ENCODE measurements at regions of chr1 and their contacts with region 1.

Region 1: GRCh38 chr1:26724926-26725325 is 29.1 kb downstream of the ARID1A start:
- DNase-seq: no peak
- ATAC-seq: no peak
- H3K4me3 ChIP-seq: no peak overlapping the region
- H3K27ac ChIP-seq: no peak overlapping the region
- H3K4me1 ChIP-seq: peaks cover 42 to 66% of the 10 kb centered on the region in 2 experiments
- H3K27me3 ChIP-seq: no peaks in the 10 kb centered on the region
- CTCF ChIP-seq: no peak
- POLR2A ChIP-seq: no peak
- RAD21 ChIP-seq: no peak

Region 2: GRCh38 chr1:26417111-26417759 is 307.7 kb before region 1 on chr1:
- CTCF ChIA-PET with region 1: no interaction called
- POLR2A ChIA-PET with region 1: no interaction called
- RAD21 ChIA-PET with region 1: no interaction called
- intact Hi-C with region 1: no loop called
- DNase-seq: peak; percentile 80
- ATAC-seq: peak; percentile 100
- H3K4me3 ChIP-seq: no peak overlapping the region
- H3K27ac ChIP-seq: no peak overlapping the region
- H3K4me1 ChIP-seq: peaks cover 0 to 19% of the 10 kb centered on the region in 2 experiments; a peak in 2 of 4 replicates
- H3K27me3 ChIP-seq: no peaks in the 10 kb centered on the region; the same call in 1 of the 2 replicates
- CTCF ChIP-seq: peak; percentile 76 to 95 (median 89)
- POLR2A ChIP-seq: no peak
- RAD21 ChIP-seq: peak; percentile 84

Region 3: GRCh38 chr1:26438041-26438440 is 286.9 kb before region 1 on chr1:
- CTCF ChIA-PET with region 1: no interaction called
- POLR2A ChIA-PET with region 1: no interaction called
- RAD21 ChIA-PET with region 1: no interaction called
- intact Hi-C with region 1: no loop called
- DNase-seq: no peak
- ATAC-seq: no peak
- H3K4me3 ChIP-seq: no peak overlapping the region
- H3K27ac ChIP-seq: no peak overlapping the region
- H3K4me1 ChIP-seq: peaks cover 3 to 4% of the 10 kb centered on the region in 2 experiments; a peak in 2 of 4 replicates
- H3K27me3 ChIP-seq: no peaks in the 10 kb centered on the region
- CTCF ChIP-seq: no peak
- POLR2A ChIP-seq: no peak
- RAD21 ChIP-seq: no peak

Region 4: DNA sequence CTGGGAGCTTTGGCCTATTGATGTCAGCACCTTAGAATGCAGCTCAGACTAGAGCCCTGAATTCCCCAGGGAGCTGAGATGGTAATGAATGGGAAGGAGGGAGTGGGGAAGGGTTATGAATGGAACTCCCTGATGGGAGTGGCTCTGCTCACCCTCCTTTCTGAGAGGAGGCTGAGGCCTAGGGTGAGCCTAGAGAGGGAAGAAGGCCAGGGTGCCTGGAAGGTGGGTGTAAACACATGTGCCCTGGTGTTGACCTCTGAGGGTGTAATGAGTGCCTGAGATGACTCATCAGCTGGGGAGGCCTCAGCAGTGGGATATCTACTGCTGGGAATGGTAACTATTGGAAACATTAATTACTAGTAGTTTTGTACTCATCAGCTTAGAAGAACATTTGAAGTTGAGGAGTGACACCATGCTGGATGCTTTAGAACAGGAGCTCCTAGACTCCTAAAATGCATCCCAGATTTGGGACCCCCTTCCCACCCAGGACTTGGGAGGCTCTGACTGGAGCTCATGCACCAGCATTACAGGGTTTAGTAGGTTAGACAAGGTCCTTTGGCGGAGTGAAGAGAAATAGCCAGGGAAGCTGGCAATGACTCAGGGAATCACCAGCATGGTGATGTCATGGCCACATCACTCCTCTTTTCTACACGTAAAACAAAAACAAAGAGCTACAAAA is 46.9 kb after region 1 on chr1:
- CTCF ChIA-PET with region 1: no interaction called
- POLR2A ChIA-PET with region 1: no interaction called
- RAD21 ChIA-PET with region 1: no interaction called
- intact Hi-C with region 1: loop called (anchors 5 kb)
- DNase-seq: peak; percentile 52
- ATAC-seq: peak; percentile 90
- H3K4me3 ChIP-seq: peak overlapping the region in 1 of 2 experiments; percentile 26; a peak in 2 of 4 replicates
- H3K27ac ChIP-seq: peak overlapping the region; percentile 52
- H3K4me1 ChIP-seq: peaks cover 21 to 59% of the 10 kb centered on the region in 2 experiments
- H3K27me3 ChIP-seq: no peaks in the 10 kb centered on the region
- CTCF ChIP-seq: no peak
- POLR2A ChIP-seq: no peak
- RAD21 ChIP-seq: no peak

Measured in HCT116 (cell line).